A673 (cell line): ENCODE measurements at regions of chr9 and their contacts with region 1.

Region 1: DNA sequence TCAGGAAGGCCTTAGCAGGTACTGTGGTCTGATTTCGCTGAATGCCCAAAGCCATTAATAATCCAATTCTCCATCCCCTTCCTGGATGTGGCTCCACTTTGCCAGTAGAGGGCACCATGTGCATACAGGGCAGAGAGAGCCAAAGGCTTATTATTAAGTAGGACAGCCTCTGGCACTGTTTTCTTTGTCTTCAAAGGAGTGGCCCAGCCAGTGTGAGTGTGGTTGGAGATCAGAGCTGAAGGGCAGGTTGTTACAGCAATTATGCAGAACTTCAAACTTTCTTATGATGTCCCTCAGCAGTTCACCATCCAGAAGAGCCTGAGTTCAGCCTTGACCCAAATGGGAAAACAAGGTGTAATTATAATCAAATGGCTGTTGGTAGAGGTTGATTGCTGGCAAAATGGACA is 38.6 kb upstream of the CEMIP2 start:
- DNase-seq: peak; percentile 84
- H3K4me3 ChIP-seq: no peak overlapping the region
- H3K27ac ChIP-seq: no peak overlapping the region
- H3K4me1 ChIP-seq: no peaks in the 10 kb centered on the region
- H3K27me3 ChIP-seq: no peaks in the 10 kb centered on the region
- CTCF ChIP-seq: peak; percentile 95

Region 2: DNA sequence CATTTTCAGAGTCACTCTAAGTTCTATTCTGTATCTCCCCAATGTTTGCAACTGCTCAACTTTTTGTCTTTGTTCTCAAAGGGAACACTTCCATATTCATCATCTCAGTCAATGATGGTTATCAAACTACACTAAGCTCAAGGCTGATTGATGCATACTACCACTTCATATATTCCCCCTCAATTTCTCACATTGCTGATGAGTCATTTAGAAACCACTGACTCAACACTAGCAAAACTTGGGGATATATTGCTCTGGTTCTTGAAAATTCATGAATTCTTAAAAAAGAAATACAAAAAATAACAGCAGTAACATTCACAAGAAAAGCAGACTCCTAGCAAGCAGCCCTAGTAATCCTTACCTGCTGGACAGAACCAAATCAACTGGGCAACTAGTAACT is 51.9 kb after region 1 on chr9:
- CTCF ChIA-PET with region 1: no interaction called
- POLR2A ChIA-PET with region 1: no interaction called
- intact Hi-C with region 1: no loop called
- DNase-seq: no peak
- H3K4me3 ChIP-seq: no peak overlapping the region
- H3K27ac ChIP-seq: no peak overlapping the region
- H3K4me1 ChIP-seq: no peaks in the 10 kb centered on the region
- H3K27me3 ChIP-seq: no peaks in the 10 kb centered on the region
- CTCF ChIP-seq: no peak

Region 3: DNA sequence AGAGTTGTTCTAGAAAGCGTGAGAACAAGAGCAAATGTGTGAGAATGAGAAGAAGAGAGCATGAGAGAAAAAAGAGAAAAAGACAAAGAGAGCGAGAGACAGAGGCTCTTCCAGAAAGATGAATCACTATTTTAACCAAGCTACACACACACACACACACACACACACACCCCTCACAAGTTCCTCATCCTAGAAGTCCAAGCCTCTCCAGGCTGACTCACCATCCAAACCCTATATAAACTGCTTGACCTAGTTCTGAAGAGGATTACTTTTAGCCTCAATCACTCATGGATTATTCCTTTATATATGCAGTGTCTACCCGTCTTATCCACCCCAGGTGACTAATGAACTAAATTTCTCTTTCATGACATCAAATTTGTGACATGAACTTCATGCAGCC is 215.9 kb after region 1 on chr9:
- CTCF ChIA-PET with region 1: interaction called, 4 read pairs
- POLR2A ChIA-PET with region 1: no interaction called
- intact Hi-C with region 1: loop called (anchors 1 kb)
- DNase-seq: no peak
- H3K4me3 ChIP-seq: no peak overlapping the region
- H3K27ac ChIP-seq: no peak overlapping the region
- H3K4me1 ChIP-seq: no peaks in the 10 kb centered on the region
- H3K27me3 ChIP-seq: no peaks in the 10 kb centered on the region
- CTCF ChIP-seq: no peak

Region 4: DNA sequence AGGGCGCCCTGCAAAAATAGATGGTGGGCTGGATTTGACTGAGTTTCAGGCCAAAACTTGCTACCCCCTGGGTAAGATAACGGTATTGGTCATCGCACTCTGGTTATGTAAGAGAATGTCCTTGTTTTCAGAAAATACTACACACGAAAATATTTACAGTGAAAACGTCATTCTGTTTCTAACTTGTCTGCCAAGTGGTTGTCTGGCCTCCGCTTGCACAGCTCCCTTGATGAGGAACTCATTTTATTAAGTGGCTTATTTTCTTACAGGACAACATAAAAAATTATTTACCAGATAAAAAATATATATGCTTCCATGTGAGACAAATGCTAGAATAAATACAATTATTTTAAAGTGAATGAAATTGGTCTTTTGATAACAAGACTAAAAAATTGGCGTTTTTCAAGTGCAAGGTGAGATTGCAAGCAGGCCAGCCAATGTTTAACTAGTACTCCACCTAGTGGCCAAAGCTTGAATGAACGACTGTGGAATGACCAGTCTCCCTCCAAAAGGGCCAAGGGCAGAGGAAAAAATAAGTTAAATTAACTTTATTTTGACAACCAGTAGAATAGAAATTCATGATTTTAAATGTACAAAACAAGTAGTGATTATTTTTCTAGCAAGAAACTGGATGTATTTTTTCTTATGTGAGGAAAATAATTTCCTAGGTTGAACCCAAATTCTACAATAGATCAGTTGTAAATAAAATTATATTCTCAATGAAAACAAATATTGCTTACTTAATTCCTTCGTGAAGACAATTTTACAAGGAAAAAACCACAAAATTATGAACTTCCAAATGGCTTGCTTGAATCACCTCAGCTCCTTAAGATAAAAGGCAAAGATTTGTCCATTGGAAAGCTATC is 464.9 kb after region 1 on chr9:
- CTCF ChIA-PET with region 1: no interaction called
- POLR2A ChIA-PET with region 1: no interaction called
- intact Hi-C with region 1: loop called (anchors 2 kb)
- DNase-seq: peak; percentile 62
- H3K4me3 ChIP-seq: no peak overlapping the region
- H3K27ac ChIP-seq: no peak overlapping the region
- H3K4me1 ChIP-seq: no peaks in the 10 kb centered on the region
- H3K27me3 ChIP-seq: no peaks in the 10 kb centered on the region
- CTCF ChIP-seq: peak; percentile 85